ENCODE measurements at regions of chr3 and their contacts with region 1.

Region 1: DNA sequence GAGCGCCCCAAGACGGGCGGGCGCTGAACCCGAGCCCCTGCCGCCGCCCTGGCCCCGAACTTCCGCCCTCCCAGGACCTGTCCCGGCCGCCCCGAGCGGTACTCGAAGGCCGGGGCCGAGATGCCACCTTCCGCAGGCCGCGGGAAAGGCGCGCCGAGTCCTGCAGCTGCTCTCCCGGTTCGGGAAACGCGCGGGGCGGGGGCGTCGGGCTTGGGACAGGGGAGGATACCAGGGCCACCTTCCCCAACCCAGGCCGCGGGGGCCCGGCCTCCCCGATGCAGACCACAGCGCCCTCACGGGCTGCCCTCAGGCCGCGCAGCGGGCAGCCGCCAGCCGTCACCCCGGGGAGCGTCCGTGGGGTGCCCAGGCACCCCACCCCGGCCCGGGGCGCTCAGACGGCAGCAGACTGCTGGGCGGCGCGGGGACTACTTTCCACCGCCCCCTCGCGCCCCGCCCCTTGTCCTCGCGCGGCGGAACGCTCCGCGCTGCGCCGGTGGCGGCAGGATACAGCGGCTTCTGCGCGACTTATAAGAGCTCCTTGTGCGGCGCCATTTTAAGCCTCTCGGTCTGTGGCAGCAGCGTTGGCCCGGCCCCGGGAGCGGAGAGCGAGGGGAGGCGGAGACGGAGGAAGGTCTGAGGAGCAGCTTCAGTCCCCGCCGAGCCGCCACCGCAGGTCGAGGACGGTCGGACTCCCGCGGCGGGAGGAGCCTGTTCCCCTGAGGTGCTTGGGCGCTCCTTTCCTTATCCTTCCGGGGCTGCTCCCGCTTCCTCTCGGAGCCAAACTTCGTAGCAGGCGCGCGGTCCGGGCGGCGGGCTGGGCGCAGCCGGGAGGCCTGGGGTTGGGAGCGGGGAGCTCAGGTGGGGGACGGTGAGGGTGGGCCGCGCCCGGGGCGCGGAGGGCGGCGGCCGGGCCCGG is at the start of gene CTNNB1:
- DNase-seq: peak; percentile 91
- ATAC-seq: peak; percentile 80
- H3K4me3 Mint-ChIP-seq: peak within 1 kb of the TSS; percentile 94
- H3K27ac Mint-ChIP-seq: peak within 1 kb of the TSS; percentile 96
- H3K4me1 Mint-ChIP-seq: peaks cover 40% of the 10 kb centered on the region
- H3K27me3 Mint-ChIP-seq: peaks cover 4% of the 10 kb centered on the region
- CTCF ChIP-seq: no peak
- total RNA-seq, gene CTNNB1: 155 and 164 TPM in 2 replicates

Region 2: GRCh38 chr3:40309418-40309924 is 889.7 kb before region 1 on chr3 and contains the start of gene EIF1B:
- CTCF ChIA-PET with region 1: interaction called, 3 read pairs
- POLR2A ChIA-PET with region 1: interaction called, 8 read pairs
- intact Hi-C with region 1: loop called (anchors 2 kb)
- DNase-seq: peak; percentile 99
- ATAC-seq: peak; percentile 88
- H3K4me3 Mint-ChIP-seq: peak within 1 kb of the TSS; percentile 99
- H3K27ac Mint-ChIP-seq: peak within 1 kb of the TSS; percentile 99
- H3K4me1 Mint-ChIP-seq: peaks cover 35% of the 10 kb centered on the region
- H3K27me3 Mint-ChIP-seq: no peaks in the 10 kb centered on the region
- CTCF ChIP-seq: no peak
- total RNA-seq, gene EIF1B: 62.0 and 65.5 TPM in 2 replicates

Region 3: DNA sequence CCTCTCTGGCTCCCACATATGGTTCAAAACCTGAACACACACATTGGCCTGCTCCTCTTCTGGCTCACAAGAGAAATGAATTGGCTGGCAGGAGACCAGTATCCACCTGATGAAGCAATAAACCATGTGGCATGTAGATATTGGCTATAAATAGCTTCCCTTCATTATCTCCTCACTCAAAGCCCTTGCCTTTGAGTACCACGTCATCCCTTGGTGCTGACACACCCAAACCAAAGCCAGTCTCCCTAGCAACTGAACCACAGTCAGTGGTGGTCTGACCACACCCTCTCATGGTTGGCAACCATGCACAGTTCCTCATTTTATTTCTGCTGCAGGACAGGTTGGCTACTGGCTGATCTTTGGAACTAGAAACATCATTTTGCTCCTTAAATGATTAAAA is 575.6 kb before region 1 on chr3:
- CTCF ChIA-PET with region 1: no interaction called
- POLR2A ChIA-PET with region 1: interaction called, 16 read pairs
- intact Hi-C with region 1: loop called (anchors 1 kb)
- DNase-seq: peak; percentile 65
- ATAC-seq: peak; percentile 92
- H3K4me3 Mint-ChIP-seq: no peak overlapping the region
- H3K27ac Mint-ChIP-seq: no peak overlapping the region
- H3K4me1 Mint-ChIP-seq: peaks cover 13% of the 10 kb centered on the region
- H3K27me3 Mint-ChIP-seq: no peaks in the 10 kb centered on the region
- CTCF ChIP-seq: no peak

Region 4: GRCh38 chr3:40731445-40731844 is 467.8 kb before region 1 on chr3:
- CTCF ChIA-PET with region 1: no interaction called
- POLR2A ChIA-PET with region 1: no interaction called
- intact Hi-C with region 1: no loop called
- DNase-seq: no peak
- ATAC-seq: no peak
- H3K4me3 Mint-ChIP-seq: no peak overlapping the region
- H3K27ac Mint-ChIP-seq: no peak overlapping the region
- H3K4me1 Mint-ChIP-seq: no peaks in the 10 kb centered on the region
- H3K27me3 Mint-ChIP-seq: no peaks in the 10 kb centered on the region
- CTCF ChIP-seq: no peak

Region 5: DNA sequence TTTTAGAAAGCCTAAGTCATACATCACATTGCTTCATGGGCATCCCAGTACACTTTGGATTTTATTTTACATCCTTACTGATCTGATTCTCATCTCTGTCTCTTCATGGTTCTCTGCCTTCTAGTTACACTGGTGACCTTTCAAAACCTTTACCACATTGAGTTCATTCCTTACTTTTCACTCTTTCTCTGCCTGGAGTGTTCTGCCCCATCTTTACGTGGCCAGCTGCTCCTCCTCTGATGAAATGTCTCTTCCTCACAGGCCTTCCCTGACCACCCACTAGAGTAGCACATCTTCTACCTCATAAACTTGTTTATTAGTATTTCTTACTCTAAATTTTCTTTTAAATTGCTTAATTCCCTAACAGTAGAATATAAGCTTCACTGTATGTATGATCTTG is 17.8 kb after region 1 on chr3:
- CTCF ChIA-PET with region 1: interaction called, 3 read pairs
- POLR2A ChIA-PET with region 1: interaction called, 25 read pairs
- intact Hi-C with region 1: loop called (anchors 2 kb)
- DNase-seq: no peak
- ATAC-seq: no peak
- H3K4me3 Mint-ChIP-seq: peak overlapping the region; percentile 6
- H3K27ac Mint-ChIP-seq: peak overlapping the region; percentile 43
- H3K4me1 Mint-ChIP-seq: peaks cover 90% of the 10 kb centered on the region
- H3K27me3 Mint-ChIP-seq: no peaks in the 10 kb centered on the region
- CTCF ChIP-seq: no peak

Region 6: DNA sequence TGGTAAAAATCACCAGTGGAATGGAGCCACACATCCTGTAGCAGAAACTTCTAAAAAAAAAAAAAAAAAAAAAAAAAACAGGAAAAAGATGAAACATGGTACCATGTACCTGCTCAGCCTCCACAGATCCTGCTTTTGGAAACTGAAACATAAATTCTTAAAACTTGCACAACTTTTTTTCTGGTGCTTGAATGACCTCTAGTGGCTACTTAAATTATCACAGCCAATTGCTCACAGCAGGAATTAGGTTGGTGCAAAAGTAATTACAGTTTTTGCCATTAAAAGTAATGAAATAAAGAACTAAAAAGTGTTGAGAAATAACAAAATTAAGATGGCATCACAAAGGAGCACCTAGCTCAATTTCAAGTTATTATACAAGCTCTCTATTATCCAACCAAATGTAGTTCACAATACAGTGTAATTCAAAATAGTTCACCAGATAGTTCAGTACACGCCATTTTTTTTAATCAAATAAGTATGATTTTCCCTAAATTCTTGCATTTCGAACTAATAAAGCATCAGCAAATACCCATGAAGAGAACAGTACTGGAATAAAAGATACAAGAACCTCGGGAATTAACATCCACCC is 682.1 kb after region 1 on chr3:
- CTCF ChIA-PET with region 1: no interaction called
- POLR2A ChIA-PET with region 1: no interaction called
- intact Hi-C with region 1: loop called (anchors 5 kb)
- DNase-seq: no peak
- ATAC-seq: no peak
- H3K4me3 Mint-ChIP-seq: no peak overlapping the region
- H3K27ac Mint-ChIP-seq: no peak overlapping the region
- H3K4me1 Mint-ChIP-seq: no peaks in the 10 kb centered on the region
- H3K27me3 Mint-ChIP-seq: no peaks in the 10 kb centered on the region
- CTCF ChIP-seq: peak; percentile 74

Region 7: GRCh38 chr3:42581709-42582473 is 1382.7 kb after region 1 on chr3 and contains the start of gene SEC22C:
- CTCF ChIA-PET with region 1: no interaction called
- POLR2A ChIA-PET with region 1: no interaction called
- intact Hi-C with region 1: loop called (anchors 10 kb)
- DNase-seq: peak; percentile 92
- ATAC-seq: peak; percentile 92
- H3K4me3 Mint-ChIP-seq: peak within 1 kb of the TSS; percentile 94
- H3K27ac Mint-ChIP-seq: peak within 1 kb of the TSS; percentile 97
- H3K4me1 Mint-ChIP-seq: peaks cover 29% of the 10 kb centered on the region
- H3K27me3 Mint-ChIP-seq: no peaks in the 10 kb centered on the region
- CTCF ChIP-seq: no peak
- total RNA-seq, gene SEC22C: 36.4 and 38.3 TPM in 2 replicates

Measured in activated B cell treated with CpG ODN at 0.5 μM for 24 hours (primary cell).